Mammary epithelial cell (primary cell): ENCODE measurements at regions of chr4 and their contacts with region 1.

Region 1: GRCh38 chr4:81405894-81406401 is 65.8 kb downstream of the RASGEF1B start:
- DNase-seq: peak; percentile 59
- H3K4me3 ChIP-seq: peak overlapping the region in 2 of 3 experiments; percentile 15 to 31
- H3K27ac ChIP-seq: no peak overlapping the region
- H3K4me1 ChIP-seq: no peaks in the 10 kb centered on the region
- H3K27me3 ChIP-seq: no peaks in the 10 kb centered on the region
- CTCF ChIP-seq: peak; percentile 47 to 55

Region 2: GRCh38 chr4:81471588-81472288 is 65.8 kb after region 1 on chr4 and contains the start of gene RASGEF1B:
- CTCF ChIA-PET with region 1: no interaction called
- dilution Hi-C with region 1: no loop called
- in situ Hi-C with region 1: no loop called
- intact Hi-C with region 1: loop called (anchors 1 kb)
- DNase-seq: peak; percentile 88
- H3K4me3 ChIP-seq: peak within 1 kb of the TSS; percentile 61 to 85 (median 68)
- H3K27ac ChIP-seq: peak within 1 kb of the TSS; percentile 30
- H3K4me1 ChIP-seq: peaks cover 23% of the 10 kb centered on the region
- H3K27me3 ChIP-seq: no peaks in the 10 kb centered on the region
- CTCF ChIP-seq: peak in 1 of 2 donors; percentile 1
- total RNA-seq, gene RASGEF1B: 10.6 to 15.3 TPM

Region 3: GRCh38 chr4:81740487-81740886 is 334.5 kb after region 1 on chr4:
- CTCF ChIA-PET with region 1: no interaction called
- dilution Hi-C with region 1: no loop called
- in situ Hi-C with region 1: no loop called
- intact Hi-C with region 1: no loop called
- DNase-seq: no peak
- H3K4me3 ChIP-seq: no peak overlapping the region
- H3K27ac ChIP-seq: no peak overlapping the region
- H3K4me1 ChIP-seq: no peaks in the 10 kb centered on the region
- H3K27me3 ChIP-seq: no peaks in the 10 kb centered on the region
- CTCF ChIP-seq: no peak

Region 4: DNA sequence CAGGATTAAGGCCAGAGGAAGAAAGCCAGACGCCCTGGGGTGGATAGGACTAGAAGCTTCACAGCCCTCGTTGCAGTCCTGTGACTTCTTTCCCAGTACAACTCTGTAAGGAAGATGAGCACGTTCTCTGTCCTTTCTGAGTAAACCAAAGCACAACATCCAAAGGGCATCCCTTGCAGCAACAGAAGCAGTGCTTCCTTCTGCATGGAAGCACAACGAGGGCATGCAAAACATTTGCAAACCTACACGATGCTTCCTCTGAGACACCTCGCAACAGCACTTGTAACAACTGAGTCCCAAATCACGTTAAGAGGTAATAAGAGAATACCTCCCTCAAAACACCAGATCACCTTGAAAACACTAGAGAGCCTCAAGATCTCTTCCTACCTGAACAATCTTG is 401.4 kb after region 1 on chr4:
- CTCF ChIA-PET with region 1: no interaction called
- dilution Hi-C with region 1: no loop called
- in situ Hi-C with region 1: no loop called
- intact Hi-C with region 1: loop called (anchors 1 kb)
- DNase-seq: no peak
- H3K4me3 ChIP-seq: no peak overlapping the region
- H3K27ac ChIP-seq: no peak overlapping the region
- H3K4me1 ChIP-seq: no peaks in the 10 kb centered on the region
- H3K27me3 ChIP-seq: no peaks in the 10 kb centered on the region
- CTCF ChIP-seq: no peak

Region 5: DNA sequence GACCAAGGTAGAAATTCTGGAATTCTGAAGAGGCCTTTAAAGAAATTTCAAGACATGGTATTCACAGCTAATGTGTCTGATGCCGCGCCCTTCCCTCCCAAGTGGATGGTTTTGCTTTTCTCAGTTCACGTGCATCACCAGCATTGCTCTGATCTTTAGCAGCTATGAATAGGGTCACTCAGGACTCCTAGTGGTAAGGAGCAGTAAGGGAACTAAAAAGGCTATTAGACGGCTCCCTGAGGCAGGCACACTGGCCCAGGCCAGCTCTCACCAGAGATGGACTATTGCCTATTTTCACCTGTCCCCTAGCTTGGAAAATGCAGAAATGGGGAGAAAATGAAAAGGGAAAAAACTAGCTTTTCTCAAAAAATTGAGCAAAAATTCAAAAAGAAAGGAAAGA is 513.3 kb after region 1 on chr4:
- CTCF ChIA-PET with region 1: no interaction called
- dilution Hi-C with region 1: no loop called
- in situ Hi-C with region 1: no loop called
- intact Hi-C with region 1: loop called (anchors 5 kb)
- DNase-seq: peak; percentile 27
- H3K4me3 ChIP-seq: no peak overlapping the region
- H3K27ac ChIP-seq: no peak overlapping the region
- H3K4me1 ChIP-seq: no peaks in the 10 kb centered on the region
- H3K27me3 ChIP-seq: no peaks in the 10 kb centered on the region
- CTCF ChIP-seq: peak; percentile 32 to 47

Region 6: DNA sequence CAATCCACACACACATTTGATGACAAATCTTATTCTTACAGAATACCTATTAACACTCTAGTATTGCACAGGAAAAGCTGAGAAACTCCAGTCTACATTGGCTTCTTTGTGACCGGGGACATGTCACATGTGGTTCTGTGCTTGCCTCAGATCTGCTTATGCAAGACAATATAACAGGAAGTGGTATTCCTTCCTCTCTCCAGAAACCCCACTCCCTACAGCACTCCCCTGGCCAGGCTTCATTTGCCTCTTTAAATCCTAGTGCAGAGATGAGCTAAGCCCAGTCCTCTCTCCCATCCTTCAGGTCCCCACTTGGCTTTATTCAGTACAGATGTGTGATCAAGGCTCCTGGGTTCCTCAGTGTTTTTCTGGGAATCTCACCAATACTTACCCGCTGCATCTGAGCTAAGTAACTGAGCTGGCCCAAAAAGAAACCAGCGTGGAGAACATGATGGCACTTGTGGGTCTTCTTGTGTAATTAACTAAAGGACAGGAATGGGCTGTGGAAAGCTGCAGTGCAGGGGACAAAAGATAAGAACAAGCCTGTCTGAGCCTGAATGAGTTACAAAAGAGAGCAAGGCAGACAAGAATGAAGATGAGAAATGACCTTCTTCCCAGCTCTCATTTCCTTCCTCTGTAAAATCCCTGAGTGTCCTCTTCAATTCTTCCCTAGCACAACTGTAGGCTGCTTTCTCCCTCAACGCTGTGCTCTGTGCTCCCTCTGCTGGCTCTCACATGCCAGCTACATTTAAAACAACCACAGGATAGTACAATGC is 862.3 kb after region 1 on chr4:
- CTCF ChIA-PET with region 1: no interaction called
- dilution Hi-C with region 1: no loop called
- in situ Hi-C with region 1: loop called in 1 of 2 experiments (anchors 10 kb)
- intact Hi-C with region 1: loop called (anchors 1 kb)
- DNase-seq: peak; percentile 70
- H3K4me3 ChIP-seq: no peak overlapping the region
- H3K27ac ChIP-seq: peak overlapping the region; percentile 32
- H3K4me1 ChIP-seq: peaks cover 11% of the 10 kb centered on the region
- H3K27me3 ChIP-seq: no peaks in the 10 kb centered on the region
- CTCF ChIP-seq: peak; percentile 94 to 99

Region 7: DNA sequence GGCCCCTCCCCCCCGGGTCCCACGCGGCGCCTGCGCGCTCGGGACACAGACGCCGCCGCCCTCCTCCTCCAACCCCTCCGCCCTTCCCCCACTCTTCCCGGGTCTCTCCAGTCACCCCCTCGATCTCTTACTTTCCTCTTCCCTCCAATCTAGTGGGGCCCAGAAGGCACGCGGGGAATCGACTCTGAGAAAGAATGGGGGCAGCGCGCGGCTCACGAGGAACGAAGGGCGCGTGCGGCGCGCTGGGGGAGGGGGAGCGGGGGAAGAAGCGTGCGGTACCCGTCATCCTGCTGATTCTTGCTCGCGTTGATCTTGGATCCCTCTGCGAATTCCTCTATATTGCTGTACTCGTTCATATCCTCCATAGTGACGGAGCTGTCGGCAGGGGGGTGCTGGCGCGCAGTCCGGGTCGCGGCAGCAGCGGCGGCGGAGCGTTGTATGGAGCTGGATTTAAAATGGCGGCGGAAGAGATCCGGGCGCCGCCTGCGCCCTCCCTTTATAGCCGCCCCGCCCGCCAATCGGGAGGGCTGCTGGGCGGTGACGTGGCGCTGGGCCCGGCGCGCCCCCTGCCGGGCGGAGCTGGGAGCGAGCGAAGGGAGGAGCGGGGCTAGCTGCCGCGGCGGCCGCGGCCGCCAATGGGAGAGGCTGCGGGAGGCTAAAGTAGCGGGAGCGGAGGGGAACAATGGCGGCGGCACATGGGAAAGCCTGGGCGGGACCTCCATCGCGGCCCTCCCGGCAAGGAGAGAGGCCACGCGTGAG is 1023.2 kb after region 1 on chr4:
- CTCF ChIA-PET with region 1: no interaction called
- dilution Hi-C with region 1: no loop called
- in situ Hi-C with region 1: no loop called
- intact Hi-C with region 1: loop called (anchors 2 kb)
- DNase-seq: peak; percentile 91
- H3K4me3 ChIP-seq: peak overlapping the region; percentile 95 to 98 (median 98)
- H3K27ac ChIP-seq: peak overlapping the region; percentile 96
- H3K4me1 ChIP-seq: peaks cover 42% of the 10 kb centered on the region
- H3K27me3 ChIP-seq: no peaks in the 10 kb centered on the region
- CTCF ChIP-seq: peak; percentile 74 to 78